AG04450 (cell line): ENCODE measurements at regions of chr1 and their contacts with region 1.

Region 1: DNA sequence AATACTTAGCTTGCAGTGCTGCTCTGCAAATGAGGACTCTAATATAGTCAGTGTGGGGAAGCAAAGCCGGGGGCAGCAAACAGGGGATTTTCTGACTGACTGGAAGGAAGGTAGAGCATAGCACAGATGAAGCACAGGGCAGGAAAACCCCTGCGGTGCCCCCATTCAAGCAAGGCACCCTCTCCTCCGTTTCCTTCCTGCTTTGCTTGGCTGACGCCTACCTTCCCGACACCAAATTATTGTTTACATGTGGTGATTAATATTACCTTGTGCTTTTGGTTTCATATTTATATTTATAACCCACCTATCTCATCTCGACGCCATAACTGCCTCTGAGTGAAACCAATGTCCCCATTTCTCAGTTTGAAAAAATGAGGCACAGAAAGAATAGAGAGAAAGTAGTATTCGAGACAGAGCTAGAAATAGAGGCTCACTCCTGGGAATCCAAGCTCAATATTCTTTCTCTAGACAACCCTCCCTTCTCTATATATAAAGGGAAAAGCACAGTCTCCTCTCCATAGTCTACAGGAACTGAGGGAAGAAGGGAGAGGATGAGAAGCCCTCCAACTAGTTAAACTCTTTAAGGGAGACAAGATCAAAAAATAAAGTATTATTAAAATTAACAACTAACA is 41.3 kb downstream of the PIK3C2B start:
- DNase-seq: no peak
- H3K4me3 ChIP-seq: no peak overlapping the region
- H3K27ac ChIP-seq: no peak overlapping the region
- H3K27me3 ChIP-seq: no peaks in the 10 kb centered on the region
- CTCF ChIP-seq: no peak

Region 2: DNA sequence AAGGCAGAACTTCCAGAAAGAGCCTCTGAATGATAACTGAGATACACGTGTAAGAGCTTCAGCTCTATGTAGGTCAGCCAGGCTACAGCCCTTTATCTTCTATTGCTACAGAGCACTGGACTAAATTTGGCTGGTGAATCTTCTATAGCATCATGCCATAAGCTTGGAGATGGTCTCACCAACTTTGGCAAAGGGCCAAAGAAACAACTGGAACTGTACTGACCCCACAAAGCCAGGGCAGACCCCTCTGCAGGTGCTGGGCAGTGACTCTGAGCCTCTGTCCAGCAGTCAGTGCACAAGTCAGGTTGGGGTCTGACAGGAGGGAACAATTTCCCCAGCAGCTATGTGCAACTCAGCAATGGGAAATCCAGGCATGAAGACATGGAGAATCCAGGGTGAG is 359.6 kb after region 1 on chr1:
- CTCF ChIA-PET with region 1: interaction called, 16 read pairs
- POLR2A ChIA-PET with region 1: no interaction called
- DNase-seq: no peak
- H3K4me3 ChIP-seq: no peak overlapping the region
- H3K27ac ChIP-seq: no peak overlapping the region
- H3K27me3 ChIP-seq: peaks cover 5% of the 10 kb centered on the region
- CTCF ChIP-seq: no peak